B cell (primary cell): ENCODE measurements at regions of chr10 and their contacts with region 1.

Region 1: GRCh38 chr10:47261121-47261520 is 38.9 kb upstream of the GDF10 start:
- DNase-seq: peak; percentile 82
- ATAC-seq: peak; percentile 86
- H3K4me3 ChIP-seq: no peak overlapping the region
- H3K4me3 Mint-ChIP-seq: peak overlapping the region; percentile 71
- H3K27ac ChIP-seq: peak overlapping the region; percentile 66 to 82
- H3K27ac Mint-ChIP-seq: peak overlapping the region; percentile 99
- H3K4me1 ChIP-seq: peaks cover 55 to 57% of the 10 kb centered on the region in 2 donors
- H3K4me1 Mint-ChIP-seq: peaks cover 55% of the 10 kb centered on the region
- H3K27me3 ChIP-seq: no peaks in the 10 kb centered on the region
- H3K27me3 Mint-ChIP-seq: no peaks in the 10 kb centered on the region
- CTCF ChIP-seq: no peak

Region 2: DNA sequence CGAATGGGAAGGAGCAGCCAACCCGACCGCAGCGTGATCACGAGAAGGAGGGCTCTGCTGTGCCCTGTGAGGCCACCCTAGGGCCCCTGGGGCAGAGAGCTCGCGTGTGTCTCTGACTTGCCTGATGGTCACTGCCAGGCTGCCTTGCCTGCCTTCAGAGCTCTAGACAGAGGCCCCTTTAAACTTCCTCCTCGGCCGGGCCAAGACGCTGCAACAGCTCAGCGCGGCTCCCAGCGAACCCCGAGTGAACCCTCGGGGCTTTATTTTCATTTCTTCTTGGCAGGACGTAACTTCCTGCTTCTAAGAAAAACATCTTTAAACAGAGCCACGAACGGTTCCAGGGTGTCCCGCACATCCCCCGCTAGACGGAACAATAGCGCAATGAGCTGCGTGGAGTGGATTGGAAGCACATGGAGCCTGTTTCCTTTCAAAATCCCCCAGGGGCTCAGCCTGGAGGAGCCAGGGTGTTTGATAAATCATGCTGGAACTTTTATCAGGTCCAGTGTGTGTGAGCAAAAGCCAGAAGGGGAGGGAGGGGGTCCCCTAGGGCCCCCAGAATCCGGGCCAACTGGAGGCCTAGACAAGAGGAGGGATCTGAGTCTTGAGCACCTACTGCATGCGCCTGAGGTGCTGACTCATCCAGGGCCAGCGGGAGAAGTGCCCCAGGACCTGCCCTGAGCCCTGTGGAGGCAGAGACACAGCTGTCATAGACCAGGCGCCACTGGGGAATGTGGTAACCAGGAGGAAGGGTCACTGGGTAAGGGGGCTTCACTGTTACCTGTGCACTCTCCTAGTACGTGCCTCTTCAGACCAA is 95.2 kb before region 1 on chr10:
- CTCF ChIA-PET with region 1: no interaction called
- POLR2A ChIA-PET with region 1: no interaction called
- intact Hi-C with region 1: loop called (anchors 5 kb)
- DNase-seq: peak; percentile 61
- ATAC-seq: peak; percentile 83
- H3K4me3 ChIP-seq: peak overlapping the region; percentile 3 to 69 (median 52)
- H3K4me3 Mint-ChIP-seq: peak overlapping the region; percentile 86
- H3K27ac ChIP-seq: peak overlapping the region; percentile 55 to 61
- H3K27ac Mint-ChIP-seq: peak overlapping the region; percentile 83
- H3K4me1 ChIP-seq: peaks cover 7 to 18% of the 10 kb centered on the region in 2 donors
- H3K4me1 Mint-ChIP-seq: peaks cover 13% of the 10 kb centered on the region
- H3K27me3 ChIP-seq: peaks cover 0 to 3% (median under 1%) of the 10 kb centered on the region in 4 experiments
- H3K27me3 Mint-ChIP-seq: peaks cover 23% of the 10 kb centered on the region
- CTCF ChIP-seq: no peak

Region 3: GRCh38 chr10:47243791-47244190 is 17.3 kb before region 1 on chr10:
- CTCF ChIA-PET with region 1: no interaction called
- POLR2A ChIA-PET with region 1: no interaction called
- intact Hi-C with region 1: no loop called
- DNase-seq: no peak
- ATAC-seq: no peak
- H3K4me3 ChIP-seq: no peak overlapping the region
- H3K4me3 Mint-ChIP-seq: no peak overlapping the region
- H3K27ac ChIP-seq: no peak overlapping the region
- H3K27ac Mint-ChIP-seq: no peak overlapping the region
- H3K4me1 ChIP-seq: peaks cover 0 to 2% of the 10 kb centered on the region in 2 donors
- H3K4me1 Mint-ChIP-seq: peaks cover 4% of the 10 kb centered on the region
- H3K27me3 ChIP-seq: peaks cover 0 to 2% (median 0%) of the 10 kb centered on the region in 4 experiments
- H3K27me3 Mint-ChIP-seq: no peaks in the 10 kb centered on the region
- CTCF ChIP-seq: no peak